Transverse colon (tissue), 4 donors: ENCODE measurements at regions of chr18 and their contacts with region 1.

Region 1: DNA sequence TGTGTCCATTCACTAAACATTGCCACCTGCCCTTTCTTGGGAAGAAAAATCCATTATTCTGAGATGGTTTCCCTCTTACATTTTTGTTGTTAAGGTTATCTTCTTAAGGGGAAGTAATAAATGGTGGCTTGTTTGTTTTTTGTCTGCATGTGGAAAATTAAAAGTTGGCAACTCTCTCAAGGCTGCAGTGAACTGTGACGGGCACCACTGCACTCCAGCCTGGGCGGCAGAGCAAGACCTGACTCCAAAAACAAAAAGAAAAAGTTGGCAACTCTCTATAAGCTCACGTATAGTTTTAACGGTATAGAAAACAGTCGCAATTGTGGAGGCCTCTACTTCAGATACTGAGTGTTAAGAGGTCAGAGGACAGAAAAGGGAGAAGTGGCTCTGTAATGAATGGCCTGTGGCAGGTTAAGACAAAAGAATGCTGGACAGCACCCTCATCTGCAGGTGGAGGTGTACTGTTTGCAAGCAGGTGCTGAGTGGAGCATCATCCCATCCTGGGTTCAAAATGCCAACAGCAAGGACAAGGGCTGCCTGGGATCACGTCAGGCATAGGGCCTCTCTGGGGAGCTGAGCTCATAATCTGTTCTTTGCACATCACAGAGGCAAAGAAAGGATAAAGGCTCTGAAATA is 16.7 kb downstream of the L3MBTL4 start:
- DNase-seq: no peak
- H3K4me3 ChIP-seq: no peak overlapping the region
- H3K27ac ChIP-seq: no peak overlapping the region
- H3K4me1 ChIP-seq: no peaks in the 10 kb centered on the region
- H3K27me3 ChIP-seq: no peaks in the 10 kb centered on the region
- CTCF ChIP-seq: no peak
- EP300 ChIP-seq: no peak
- POLR2A ChIP-seq: no peak

Region 2: GRCh38 chr18:6333981-6334380 is 64.1 kb before region 1 on chr18:
- in situ Hi-C with region 1: loop called in 1 of 4 experiments (anchors 10 kb)
- intact Hi-C with region 1: no loop called
- DNase-seq: no peak
- H3K4me3 ChIP-seq: no peak overlapping the region
- H3K27ac ChIP-seq: no peak overlapping the region
- H3K4me1 ChIP-seq: no peaks in the 10 kb centered on the region
- H3K27me3 ChIP-seq: no peaks in the 10 kb centered on the region
- CTCF ChIP-seq: no peak
- EP300 ChIP-seq: no peak
- POLR2A ChIP-seq: no peak